ENCODE measurements at regions of chr17 and their contacts with region 1.

Region 1: DNA sequence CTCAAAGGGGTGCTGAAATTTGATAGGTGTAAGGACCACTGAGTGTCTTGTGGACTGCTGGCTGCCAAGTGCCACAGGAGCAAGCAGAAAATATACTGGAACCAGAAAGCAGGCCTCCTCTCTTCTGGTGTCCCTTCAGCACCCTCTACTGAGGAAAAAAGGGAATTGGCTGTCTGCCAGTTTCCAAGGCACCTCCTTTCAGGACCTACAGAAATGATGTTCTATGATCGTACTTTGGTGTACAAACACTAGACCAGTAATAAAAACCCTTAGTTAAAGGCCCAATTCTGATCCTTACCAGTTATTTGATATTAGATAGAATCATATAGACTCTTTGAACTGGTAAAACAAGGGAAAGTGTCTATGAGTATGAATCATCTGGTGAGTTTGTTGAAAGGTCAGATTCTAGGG is 35.8 kb upstream of the BCAS3 start:
- DNase-seq: peak; percentile 70 to 89 (median 72)
- ATAC-seq: peak; percentile 94
- H3K4me3 ChIP-seq: no peak overlapping the region
- H3K27ac ChIP-seq: no peak overlapping the region
- H3K4me1 ChIP-seq: no peaks in the 10 kb centered on the region
- H3K27me3 ChIP-seq: no peaks in the 10 kb centered on the region
- CTCF ChIP-seq: peak; percentile 60 to 76 (median 66)
- EP300 ChIP-seq: no peak
- POLR2A ChIP-seq: no peak
- RAD21 ChIP-seq: peak; percentile 48 to 69

Region 2: GRCh38 chr17:60102632-60103096 is 539.2 kb before region 1 on chr17:
- CTCF ChIA-PET with region 1: no interaction called
- POLR2A ChIA-PET with region 1: no interaction called
- in situ Hi-C with region 1: loop called (anchors 10 kb)
- intact Hi-C with region 1: no loop called
- DNase-seq: peak in 1 of 4 experiments; percentile 30
- ATAC-seq: peak; percentile 87
- H3K4me3 ChIP-seq: peak overlapping the region; percentile 20; the same call in 1 of the 2 replicates
- H3K27ac ChIP-seq: 0 out of 3 replicates have a peak overlapping the region, but pooled peaks have one; percentile 18
- H3K4me1 ChIP-seq: peaks cover 0 to 4% of the 10 kb centered on the region in 2 experiments; a peak in 3 of 5 replicates
- H3K27me3 ChIP-seq: peaks cover 1 to 5% of the 10 kb centered on the region in 2 experiments; a peak in 1 of 5 replicates
- CTCF ChIP-seq: no peak
- EP300 ChIP-seq: no peak
- POLR2A ChIP-seq: no peak
- RAD21 ChIP-seq: no peak

Region 3: GRCh38 chr17:60435244-60436167 is 206.3 kb before region 1 on chr17:
- CTCF ChIA-PET with region 1: interaction called, 3 read pairs
- POLR2A ChIA-PET with region 1: no interaction called
- in situ Hi-C with region 1: no loop called
- intact Hi-C with region 1: loop called (anchors 5 kb)
- DNase-seq: peak; percentile 65 to 87 (median 71)
- ATAC-seq: peak; percentile 84
- H3K4me3 ChIP-seq: no peak overlapping the region
- H3K27ac ChIP-seq: no peak overlapping the region
- H3K4me1 ChIP-seq: peaks cover 3% of the 10 kb centered on the region in 2 experiments; a peak in 3 of 5 replicates
- H3K27me3 ChIP-seq: no peaks in the 10 kb centered on the region
- CTCF ChIP-seq: peak; percentile 84 to 96 (median 87)
- EP300 ChIP-seq: no peak
- POLR2A ChIP-seq: no peak
- RAD21 ChIP-seq: peak; percentile 95 to 98

Region 4: GRCh38 chr17:60577147-60577915 is 64.5 kb before region 1 on chr17:
- CTCF ChIA-PET with region 1: no interaction called
- POLR2A ChIA-PET with region 1: no interaction called
- in situ Hi-C with region 1: no loop called
- intact Hi-C with region 1: loop called (anchors 5 kb)
- DNase-seq: peak; percentile 23 to 35 (median 28)
- ATAC-seq: peak; percentile 91
- H3K4me3 ChIP-seq: no peak overlapping the region
- H3K27ac ChIP-seq: no peak overlapping the region; the same call in 2 of the 3 replicates
- H3K4me1 ChIP-seq: peaks cover 0 to 5% of the 10 kb centered on the region in 2 experiments; a peak in 3 of 5 replicates
- H3K27me3 ChIP-seq: no peaks in the 10 kb centered on the region
- CTCF ChIP-seq: peak in 2 of 3 experiments; percentile 38 to 48; a peak in 3 of 6 replicates
- EP300 ChIP-seq: no peak
- POLR2A ChIP-seq: no peak
- RAD21 ChIP-seq: peak in 1 of 2 experiments; percentile 43; a peak in 1 of 4 replicates

Region 5: DNA sequence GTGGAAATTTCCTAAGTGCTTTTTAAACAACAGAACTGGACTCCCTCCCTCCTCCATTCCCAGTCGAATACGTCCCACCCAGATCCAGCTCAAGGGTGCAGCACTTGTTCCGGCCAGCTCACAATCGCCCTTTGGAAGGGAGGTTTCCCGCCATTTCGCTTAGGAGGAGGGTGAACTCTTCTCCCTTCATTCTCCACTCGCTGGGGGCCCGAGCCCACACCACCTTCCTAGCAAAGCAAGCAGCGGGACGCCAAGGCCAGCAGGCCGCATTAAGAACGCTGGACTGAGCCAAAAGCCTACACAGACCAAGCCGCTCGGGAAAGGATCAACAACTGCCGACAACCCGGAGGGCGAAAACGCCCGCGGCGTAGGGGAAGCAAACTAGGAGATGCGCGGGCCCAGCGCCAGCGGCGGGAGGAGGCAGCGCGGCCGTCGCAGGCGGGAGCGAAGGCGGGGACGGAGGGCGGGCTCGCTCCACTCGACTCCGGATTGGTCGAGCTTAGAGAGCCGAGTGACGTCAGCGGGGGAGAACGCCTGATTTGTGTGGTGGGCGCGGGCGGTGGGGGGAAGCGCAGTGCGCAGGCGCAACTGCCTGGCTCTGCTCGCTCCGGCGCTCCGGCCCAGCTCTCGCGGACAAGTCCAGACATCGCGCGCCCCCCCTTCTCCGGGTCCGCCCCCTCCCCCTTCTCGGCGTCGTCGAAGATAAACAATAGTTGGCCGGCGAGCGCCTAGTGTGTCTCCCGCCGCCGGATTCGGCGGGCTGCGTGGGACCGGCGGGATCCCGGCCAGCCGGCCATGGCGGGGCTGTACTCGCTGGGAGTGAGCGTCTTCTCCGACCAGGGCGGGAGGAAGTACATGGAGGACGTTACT is 42.0 kb before region 1 on chr17 and contains the start of gene PPM1D:
- CTCF ChIA-PET with region 1: interaction called, 3 read pairs
- POLR2A ChIA-PET with region 1: interaction called, 5 read pairs
- in situ Hi-C with region 1: no loop called
- intact Hi-C with region 1: loop called (anchors 5 kb)
- DNase-seq: peak; percentile 99
- ATAC-seq: peak; percentile 90
- H3K4me3 ChIP-seq: peak within 1 kb of the TSS; percentile 70
- H3K27ac ChIP-seq: peak within 1 kb of the TSS; percentile 97
- H3K4me1 ChIP-seq: peaks cover 10 to 23% of the 10 kb centered on the region in 2 experiments; a peak in 4 of 5 replicates
- H3K27me3 ChIP-seq: no peaks in the 10 kb centered on the region
- CTCF ChIP-seq: 0 out of 6 replicates have a peak, but pooled peaks of 1 of the 3 experiments have one; percentile 1
- EP300 ChIP-seq: no peak
- POLR2A ChIP-seq: peak; percentile 99
- RAD21 ChIP-seq: no peak
- polyA plus RNA-seq, gene PPM1D: 2.1 to 2.7 TPM

Region 6: DNA sequence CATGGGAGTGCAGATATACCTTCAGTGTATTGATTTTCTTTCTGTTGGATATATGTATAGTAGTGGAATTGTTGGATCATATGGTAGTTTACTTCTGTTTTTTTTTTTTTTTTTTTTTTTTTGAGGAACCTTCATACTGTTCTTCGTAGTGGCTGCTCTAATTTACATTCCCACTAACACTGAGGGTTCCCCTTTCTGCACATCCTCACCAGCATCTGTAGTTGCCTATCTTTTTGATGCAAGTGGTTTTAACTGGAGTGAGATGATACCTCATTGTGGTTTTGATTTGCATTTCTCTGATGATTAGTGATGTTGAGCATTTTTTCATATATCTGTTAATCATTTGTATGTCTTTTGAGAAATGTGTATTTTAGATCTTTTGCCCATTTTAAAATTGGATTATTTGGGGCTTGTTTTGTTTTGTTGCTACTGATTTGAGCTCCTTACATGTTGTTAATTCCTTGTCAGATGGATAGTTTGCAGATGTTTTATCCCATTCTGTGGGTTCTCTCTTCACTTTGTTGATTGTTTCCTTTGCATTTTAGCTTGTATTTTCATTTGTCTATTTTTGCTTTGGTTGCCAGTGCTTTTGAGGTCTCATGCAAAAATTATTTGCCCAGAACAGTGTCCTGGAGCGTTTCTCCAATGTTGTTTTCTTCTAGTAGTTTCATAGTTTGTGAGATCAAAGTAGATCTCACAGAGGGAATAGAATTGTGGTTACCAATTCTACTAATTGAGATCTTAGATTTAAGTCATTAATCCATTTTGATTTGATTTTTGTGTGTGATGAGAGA is 10.8 kb after region 1 on chr17:
- CTCF ChIA-PET with region 1: no interaction called
- POLR2A ChIA-PET with region 1: no interaction called
- in situ Hi-C with region 1: no loop called
- intact Hi-C with region 1: no loop called
- DNase-seq: no peak
- ATAC-seq: no peak
- H3K4me3 ChIP-seq: no peak overlapping the region
- H3K27ac ChIP-seq: no peak overlapping the region
- H3K4me1 ChIP-seq: no peaks in the 10 kb centered on the region
- H3K27me3 ChIP-seq: no peaks in the 10 kb centered on the region
- CTCF ChIP-seq: no peak
- EP300 ChIP-seq: no peak
- POLR2A ChIP-seq: no peak
- RAD21 ChIP-seq: no peak

Measured in K562 (cell line).